ENCODE measurements at regions of chr4 and their contacts with region 1.

Region 1: GRCh38 chr4:122758033-122758432 is 25.5 kb downstream of the BBS12 start:
- DNase-seq: peak in 2 of 9 experiments; percentile 45 to 54
- ATAC-seq: peak; percentile 44
- H3K4me3 ChIP-seq: no peak overlapping the region
- H3K4me3 Mint-ChIP-seq: no peak overlapping the region
- H3K27ac ChIP-seq: no peak overlapping the region
- H3K27ac Mint-ChIP-seq: no peak overlapping the region
- H3K4me1 ChIP-seq: peaks cover 10% of the 10 kb centered on the region
- H3K4me1 Mint-ChIP-seq: peaks cover 16% of the 10 kb centered on the region
- H3K27me3 ChIP-seq: peaks cover 0 to 4% of the 10 kb centered on the region in 2 experiments
- H3K27me3 Mint-ChIP-seq: peaks cover 7% of the 10 kb centered on the region
- CTCF ChIP-seq: peak; percentile 84

Region 2: GRCh38 chr4:122744229-122744628 is 13.8 kb before region 1 on chr4:
- CTCF ChIA-PET with region 1: interaction called, 13 read pairs
- POLR2A ChIA-PET with region 1: no interaction called
- intact Hi-C with region 1: no loop called
- DNase-seq: no peak
- ATAC-seq: no peak
- H3K4me3 ChIP-seq: no peak overlapping the region
- H3K4me3 Mint-ChIP-seq: no peak overlapping the region
- H3K27ac ChIP-seq: no peak overlapping the region
- H3K27ac Mint-ChIP-seq: no peak overlapping the region
- H3K4me1 ChIP-seq: no peaks in the 10 kb centered on the region
- H3K4me1 Mint-ChIP-seq: no peaks in the 10 kb centered on the region
- H3K27me3 ChIP-seq: no peaks in the 10 kb centered on the region
- H3K27me3 Mint-ChIP-seq: no peaks in the 10 kb centered on the region
- CTCF ChIP-seq: no peak

Region 3: DNA sequence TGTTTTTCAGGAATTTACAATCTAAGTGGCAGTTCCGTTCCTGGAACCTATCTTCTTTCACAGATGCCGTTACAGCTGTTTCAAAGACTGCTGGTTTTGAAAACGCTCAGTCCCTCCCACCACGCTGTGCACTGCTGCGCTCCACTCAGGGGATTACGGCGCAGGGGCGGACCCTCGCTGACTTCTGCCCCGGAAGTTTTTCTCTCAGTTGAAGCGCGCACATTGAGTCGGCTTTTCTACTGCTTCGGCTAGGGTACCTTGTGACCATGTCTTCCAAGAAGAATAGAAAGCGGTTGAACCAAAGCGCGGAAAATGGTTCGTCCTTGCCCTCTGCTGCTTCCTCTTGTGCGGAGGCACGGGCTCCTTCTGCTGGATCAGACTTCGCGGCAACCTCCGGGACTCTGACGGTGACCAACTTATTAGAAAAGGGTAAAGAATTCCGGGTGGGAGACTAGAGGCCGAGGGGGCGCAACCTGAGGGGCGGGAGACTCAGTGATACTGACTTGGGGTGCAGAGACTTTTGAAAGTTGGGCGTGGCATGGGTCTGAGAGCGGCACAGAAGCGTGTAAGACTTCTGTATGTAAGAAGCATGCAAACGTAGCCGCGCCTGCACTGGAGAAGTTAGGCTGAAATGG is 165.0 kb after region 1 on chr4:
- CTCF ChIA-PET with region 1: interaction called, 11 read pairs
- POLR2A ChIA-PET with region 1: no interaction called
- intact Hi-C with region 1: loop called in 1 of 2 experiments (anchors 2 kb)
- DNase-seq: peak; percentile 72 to 92 (median 89)
- ATAC-seq: peak; percentile 98
- H3K4me3 ChIP-seq: peak overlapping the region; percentile 79 to 87
- H3K4me3 Mint-ChIP-seq: peak overlapping the region; percentile 99
- H3K27ac ChIP-seq: peak overlapping the region; percentile 62 to 74
- H3K27ac Mint-ChIP-seq: peak overlapping the region; percentile 96
- H3K4me1 ChIP-seq: peaks cover 20% of the 10 kb centered on the region
- H3K4me1 Mint-ChIP-seq: peaks cover 17% of the 10 kb centered on the region
- H3K27me3 ChIP-seq: no peaks in the 10 kb centered on the region
- H3K27me3 Mint-ChIP-seq: no peaks in the 10 kb centered on the region
- CTCF ChIP-seq: no peak

Region 4: GRCh38 chr4:122930862-122931261 is 172.8 kb after region 1 on chr4:
- CTCF ChIA-PET with region 1: interaction called, 51 read pairs
- POLR2A ChIA-PET with region 1: no interaction called
- intact Hi-C with region 1: loop called (anchors 1 kb)
- DNase-seq: peak in 2 of 9 experiments; percentile 12 to 37
- ATAC-seq: no peak
- H3K4me3 ChIP-seq: no peak overlapping the region
- H3K4me3 Mint-ChIP-seq: no peak overlapping the region
- H3K27ac ChIP-seq: no peak overlapping the region
- H3K27ac Mint-ChIP-seq: no peak overlapping the region
- H3K4me1 ChIP-seq: no peaks in the 10 kb centered on the region
- H3K4me1 Mint-ChIP-seq: peaks cover 9% of the 10 kb centered on the region
- H3K27me3 ChIP-seq: no peaks in the 10 kb centered on the region
- H3K27me3 Mint-ChIP-seq: no peaks in the 10 kb centered on the region
- CTCF ChIP-seq: peak; percentile 68

Region 5: GRCh38 chr4:123661080-123661737 is 903.2 kb after region 1 on chr4:
- CTCF ChIA-PET with region 1: no interaction called
- POLR2A ChIA-PET with region 1: no interaction called
- intact Hi-C with region 1: loop called in 1 of 2 experiments (anchors 5 kb)
- DNase-seq: peak in 2 of 9 experiments; percentile 20 to 40
- ATAC-seq: no peak
- H3K4me3 ChIP-seq: no peak overlapping the region
- H3K4me3 Mint-ChIP-seq: no peak overlapping the region
- H3K27ac ChIP-seq: no peak overlapping the region
- H3K27ac Mint-ChIP-seq: no peak overlapping the region
- H3K4me1 ChIP-seq: no peaks in the 10 kb centered on the region
- H3K4me1 Mint-ChIP-seq: no peaks in the 10 kb centered on the region
- H3K27me3 ChIP-seq: no peaks in the 10 kb centered on the region
- H3K27me3 Mint-ChIP-seq: no peaks in the 10 kb centered on the region
- CTCF ChIP-seq: peak; percentile 57

Region 6: DNA sequence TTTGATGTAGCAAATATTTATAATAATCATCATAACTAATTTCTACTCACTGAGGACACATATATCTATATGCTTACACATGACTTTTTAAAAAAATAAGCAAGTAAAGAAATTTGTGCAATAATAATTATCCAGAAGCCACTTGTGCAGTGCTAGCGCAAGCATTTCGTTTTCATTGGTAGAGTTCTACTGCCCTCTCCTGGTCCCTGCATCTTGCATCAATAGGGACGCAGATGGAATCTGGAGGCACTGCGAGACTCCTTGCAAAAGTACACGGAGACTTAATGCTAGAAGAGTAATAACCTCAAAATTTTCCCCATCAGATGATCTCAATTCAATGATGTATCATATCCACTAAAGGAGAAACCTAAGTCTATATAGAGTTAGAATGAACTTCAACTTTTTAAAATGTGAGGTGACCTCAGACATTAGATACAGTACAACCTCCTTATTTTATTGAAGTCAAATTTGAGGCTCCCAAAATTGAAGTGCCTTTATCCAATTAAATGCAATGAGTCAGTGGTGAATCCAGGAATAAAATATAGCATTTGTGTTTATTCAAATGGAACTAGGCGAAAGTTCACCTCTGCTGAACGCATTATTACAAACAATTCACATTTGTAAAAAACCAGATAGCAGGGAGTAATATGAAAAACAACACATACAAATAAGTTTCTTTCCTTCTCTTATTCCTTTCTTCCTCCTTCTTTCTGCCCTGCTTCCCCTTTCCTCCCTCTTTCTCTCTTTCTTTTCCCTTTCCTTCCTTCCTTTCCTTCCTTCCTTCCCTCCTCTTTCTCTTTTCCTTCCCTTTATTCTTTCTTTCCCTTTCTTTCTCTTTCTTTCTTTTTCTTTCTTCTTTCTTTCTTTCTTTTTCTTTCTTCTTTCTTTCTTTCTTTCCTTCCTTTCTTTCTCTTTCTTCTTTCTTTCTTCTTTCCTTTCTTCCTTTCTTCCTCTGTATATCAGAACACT is 1504.5 kb after region 1 on chr4:
- CTCF ChIA-PET with region 1: no interaction called
- POLR2A ChIA-PET with region 1: no interaction called
- intact Hi-C with region 1: loop called (anchors 5 kb)
- DNase-seq: peak in 6 of 9 experiments; percentile 4 to 57 (median 28)
- ATAC-seq: no peak
- H3K4me3 ChIP-seq: no peak overlapping the region
- H3K4me3 Mint-ChIP-seq: no peak overlapping the region
- H3K27ac ChIP-seq: no peak overlapping the region
- H3K27ac Mint-ChIP-seq: no peak overlapping the region
- H3K4me1 ChIP-seq: no peaks in the 10 kb centered on the region
- H3K4me1 Mint-ChIP-seq: no peaks in the 10 kb centered on the region
- H3K27me3 ChIP-seq: no peaks in the 10 kb centered on the region
- H3K27me3 Mint-ChIP-seq: peaks cover 2% of the 10 kb centered on the region
- CTCF ChIP-seq: peak; percentile 51

Region 7: GRCh38 chr4:124322234-124323065 is 1564.4 kb after region 1 on chr4:
- CTCF ChIA-PET with region 1: interaction called, 4 read pairs
- POLR2A ChIA-PET with region 1: no interaction called
- intact Hi-C with region 1: loop called (anchors 5 kb)
- DNase-seq: peak in 2 of 9 experiments; percentile 13 to 23
- ATAC-seq: no peak
- H3K4me3 ChIP-seq: no peak overlapping the region
- H3K4me3 Mint-ChIP-seq: no peak overlapping the region
- H3K27ac ChIP-seq: no peak overlapping the region
- H3K27ac Mint-ChIP-seq: no peak overlapping the region
- H3K4me1 ChIP-seq: no peaks in the 10 kb centered on the region
- H3K4me1 Mint-ChIP-seq: no peaks in the 10 kb centered on the region
- H3K27me3 ChIP-seq: no peaks in the 10 kb centered on the region
- H3K27me3 Mint-ChIP-seq: peaks cover 2% of the 10 kb centered on the region
- CTCF ChIP-seq: peak; percentile 74

Measured in CD8-positive, alpha-beta T cell (primary cell).